ENCODE measurements at regions of chr12 and their contacts with region 1.

Region 1: DNA sequence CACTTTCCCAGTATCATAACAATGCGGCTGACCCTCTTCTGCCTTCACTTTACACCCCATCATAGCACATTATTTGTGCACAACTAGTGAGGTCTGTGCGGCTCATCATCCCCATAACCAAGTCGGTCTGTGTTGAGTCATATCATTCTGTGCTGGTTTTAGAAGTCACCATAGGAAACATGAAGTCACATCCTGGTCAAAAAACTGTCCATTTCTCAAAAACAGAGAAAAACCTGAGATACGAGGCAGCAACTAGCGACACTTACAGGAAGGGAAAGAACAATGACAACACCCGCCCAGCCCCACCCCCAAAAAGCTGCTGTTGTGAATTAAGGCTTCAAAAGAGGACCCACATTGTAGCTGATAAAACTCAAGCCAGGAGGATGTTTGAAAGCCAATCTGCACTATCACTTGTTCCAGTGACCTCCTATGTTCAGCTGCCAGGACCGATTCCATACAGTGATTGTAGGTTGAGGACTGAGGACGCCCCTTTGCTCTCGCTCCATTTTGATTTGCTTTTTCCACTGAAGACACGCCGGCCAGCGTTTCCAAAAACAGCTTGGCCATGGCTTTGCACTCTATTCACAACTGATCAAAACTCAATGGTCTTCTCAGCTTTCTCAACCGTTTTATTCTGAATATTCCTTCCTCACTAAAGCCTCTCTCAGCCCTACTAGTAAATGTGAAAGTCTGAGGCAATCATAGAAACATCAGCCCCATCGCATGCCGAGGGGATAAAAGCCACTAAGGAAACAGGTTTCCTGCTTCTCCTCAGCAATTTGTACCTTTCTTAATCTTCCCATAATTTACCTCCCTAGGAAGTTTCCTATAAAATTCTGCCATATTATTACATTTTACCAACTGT is 87.5 kb downstream of the DUSP16 start:
- DNase-seq: peak; percentile 73
- ATAC-seq: peak; percentile 88
- H3K4me3 Mint-ChIP-seq: peak overlapping the region; percentile 58
- H3K27ac Mint-ChIP-seq: peak overlapping the region; percentile 92
- H3K4me1 Mint-ChIP-seq: peaks cover 67% of the 10 kb centered on the region
- H3K27me3 Mint-ChIP-seq: no peaks in the 10 kb centered on the region

Region 2: GRCh38 chr12:12356886-12357718 is 118.1 kb before region 1 on chr12 and contains the start of gene BORCS5:
- CTCF ChIA-PET with region 1: no interaction called
- POLR2A ChIA-PET with region 1: interaction called, 27 read pairs
- DNase-seq: peak; percentile 99
- ATAC-seq: peak; percentile 94
- H3K4me3 Mint-ChIP-seq: peak within 1 kb of the TSS; percentile 88
- H3K27ac Mint-ChIP-seq: peak within 1 kb of the TSS; percentile 94
- H3K4me1 Mint-ChIP-seq: peaks cover 48% of the 10 kb centered on the region
- H3K27me3 Mint-ChIP-seq: no peaks in the 10 kb centered on the region
- total RNA-seq, gene BORCS5: 18.8 to 21.2 TPM

Region 3: DNA sequence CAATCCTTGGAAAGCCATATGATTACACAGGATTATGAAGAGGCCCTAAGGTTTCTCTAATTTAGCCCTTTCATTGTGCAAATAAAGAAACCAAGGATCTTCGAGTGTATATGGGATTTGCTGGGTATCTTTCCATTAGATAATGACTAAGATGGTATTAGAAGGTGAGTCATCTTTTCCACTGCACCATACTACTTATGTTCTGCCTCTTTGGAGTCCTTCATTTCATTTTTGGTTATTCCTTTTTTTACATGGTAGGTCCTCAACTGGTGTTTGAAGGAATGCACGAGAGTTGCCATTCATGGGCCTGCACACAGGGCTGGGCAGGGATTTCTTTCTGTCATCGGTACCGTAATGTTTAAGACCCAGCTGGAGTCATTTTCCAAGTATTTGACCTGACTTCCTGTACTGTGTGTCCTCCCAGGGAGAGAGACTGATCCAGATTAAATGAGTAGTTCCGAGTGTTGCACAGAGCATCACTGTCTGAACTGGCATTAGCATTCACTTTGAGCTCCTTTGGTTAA is 32.6 kb before region 1 on chr12:
- CTCF ChIA-PET with region 1: interaction called, 31 read pairs
- POLR2A ChIA-PET with region 1: interaction called, 63 read pairs
- DNase-seq: no peak
- ATAC-seq: peak; percentile 24
- H3K4me3 Mint-ChIP-seq: peak overlapping the region; percentile 26
- H3K27ac Mint-ChIP-seq: peak overlapping the region; percentile 91
- H3K4me1 Mint-ChIP-seq: peaks cover 63% of the 10 kb centered on the region
- H3K27me3 Mint-ChIP-seq: no peaks in the 10 kb centered on the region

Region 4: GRCh38 chr12:12486661-12487240 is 11.6 kb after region 1 on chr12:
- CTCF ChIA-PET with region 1: interaction called, 11 read pairs
- POLR2A ChIA-PET with region 1: interaction called, 4 read pairs
- DNase-seq: no peak
- ATAC-seq: no peak
- H3K4me3 Mint-ChIP-seq: no peak overlapping the region
- H3K27ac Mint-ChIP-seq: no peak overlapping the region
- H3K4me1 Mint-ChIP-seq: peaks cover 39% of the 10 kb centered on the region
- H3K27me3 Mint-ChIP-seq: no peaks in the 10 kb centered on the region

Region 5: DNA sequence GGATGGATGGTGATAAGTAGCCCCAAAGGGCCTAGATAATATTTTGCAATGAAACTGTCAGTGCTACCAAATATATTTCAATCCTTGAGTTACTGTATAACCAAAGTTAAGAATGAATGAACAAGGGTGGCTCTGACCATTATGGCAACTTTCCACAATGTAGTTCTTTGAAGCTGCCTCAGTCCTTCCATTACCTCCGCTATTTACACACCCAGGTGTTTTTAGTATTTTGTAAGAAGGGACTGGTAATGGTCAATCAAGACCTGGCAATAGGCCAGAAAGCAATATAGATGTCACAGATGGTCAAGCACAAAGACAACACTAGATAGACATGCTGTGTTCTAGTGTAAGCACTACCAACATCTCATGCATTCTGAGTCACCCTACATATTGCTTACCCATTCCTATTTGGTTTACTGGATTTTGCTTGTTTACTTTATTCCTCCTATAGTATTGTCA is 71.2 kb after region 1 on chr12:
- CTCF ChIA-PET with region 1: no interaction called
- POLR2A ChIA-PET with region 1: no interaction called
- DNase-seq: no peak
- ATAC-seq: no peak
- H3K4me3 Mint-ChIP-seq: no peak overlapping the region
- H3K27ac Mint-ChIP-seq: no peak overlapping the region
- H3K4me1 Mint-ChIP-seq: peaks cover 18% of the 10 kb centered on the region
- H3K27me3 Mint-ChIP-seq: no peaks in the 10 kb centered on the region

Region 6: GRCh38 chr12:12716793-12717585 is 241.8 kb after region 1 on chr12 and contains the start of gene CDKN1B:
- CTCF ChIA-PET with region 1: interaction called, 4 read pairs
- POLR2A ChIA-PET with region 1: interaction called, 32 read pairs
- DNase-seq: peak; percentile 92
- ATAC-seq: peak; percentile 71
- H3K4me3 Mint-ChIP-seq: peak within 1 kb of the TSS; percentile 99
- H3K27ac Mint-ChIP-seq: peak within 1 kb of the TSS; percentile 98
- H3K4me1 Mint-ChIP-seq: peaks cover 25% of the 10 kb centered on the region
- H3K27me3 Mint-ChIP-seq: no peaks in the 10 kb centered on the region
- total RNA-seq, gene CDKN1B: 90.5 to 96.7 TPM

Measured in activated CD8-positive, alpha-beta T cell treated with anti-CD3 and anti-CD28 coated beads, Interleukin-2, amount 10 ng/mL, durations not matched to agents 7 days and 5 days (primary cell).